Stomach (tissue), 19 donors: ENCODE measurements at regions of chr11 and their contacts with region 1.

Region 1: DNA sequence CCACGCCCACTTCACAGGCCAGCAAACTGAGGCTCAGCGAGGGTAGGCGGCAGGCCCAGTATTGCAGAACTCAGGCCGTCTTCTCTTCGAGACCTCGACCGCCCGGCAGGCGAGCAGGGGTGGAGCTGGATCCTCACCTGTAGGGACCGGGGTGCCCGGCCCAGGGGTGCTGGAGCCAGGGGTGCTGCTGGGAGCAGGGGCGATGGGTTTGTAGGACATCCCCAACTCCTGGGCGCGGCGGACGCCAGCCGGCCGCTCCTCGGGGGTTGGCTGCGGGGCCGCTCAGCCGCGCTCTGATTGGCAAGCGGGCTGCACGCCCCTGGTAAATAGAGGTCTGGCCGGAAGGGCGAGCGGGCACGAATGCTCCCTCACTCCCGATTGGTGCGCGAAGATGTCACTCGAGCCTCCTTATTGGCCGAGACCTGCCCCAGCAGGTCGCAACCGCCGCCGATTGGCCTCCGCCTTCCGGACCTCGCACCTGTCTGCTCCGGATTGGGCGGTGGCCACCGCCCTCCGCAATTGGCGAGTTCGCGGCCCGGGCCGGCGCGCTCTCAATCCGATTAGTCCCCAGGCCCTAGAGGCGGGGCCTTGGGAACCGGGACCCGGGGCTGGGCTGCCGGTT is at the start of gene CDK2AP2:
- DNase-seq: peak; percentile 100
- H3K4me3 ChIP-seq: peak within 1 kb of the TSS; percentile 72 to 87 (median 80)
- H3K27ac ChIP-seq: peak within 1 kb of the TSS; percentile 94 to 99 (median 98)
- H3K4me1 ChIP-seq: peaks cover 49 to 56% (median 54%) of the 10 kb centered on the region in 4 donors
- H3K27me3 ChIP-seq: peaks cover 0 to 34% (median 0%) of the 10 kb centered on the region in 3 donors
- CTCF ChIP-seq: no peak
- EP300 ChIP-seq: no peak
- POLR2A ChIP-seq: peak in 1 of 4 donors; percentile 86
- total RNA-seq, gene CDK2AP2: 8.3 to 68.3 (median 52.7) TPM

Region 2: DNA sequence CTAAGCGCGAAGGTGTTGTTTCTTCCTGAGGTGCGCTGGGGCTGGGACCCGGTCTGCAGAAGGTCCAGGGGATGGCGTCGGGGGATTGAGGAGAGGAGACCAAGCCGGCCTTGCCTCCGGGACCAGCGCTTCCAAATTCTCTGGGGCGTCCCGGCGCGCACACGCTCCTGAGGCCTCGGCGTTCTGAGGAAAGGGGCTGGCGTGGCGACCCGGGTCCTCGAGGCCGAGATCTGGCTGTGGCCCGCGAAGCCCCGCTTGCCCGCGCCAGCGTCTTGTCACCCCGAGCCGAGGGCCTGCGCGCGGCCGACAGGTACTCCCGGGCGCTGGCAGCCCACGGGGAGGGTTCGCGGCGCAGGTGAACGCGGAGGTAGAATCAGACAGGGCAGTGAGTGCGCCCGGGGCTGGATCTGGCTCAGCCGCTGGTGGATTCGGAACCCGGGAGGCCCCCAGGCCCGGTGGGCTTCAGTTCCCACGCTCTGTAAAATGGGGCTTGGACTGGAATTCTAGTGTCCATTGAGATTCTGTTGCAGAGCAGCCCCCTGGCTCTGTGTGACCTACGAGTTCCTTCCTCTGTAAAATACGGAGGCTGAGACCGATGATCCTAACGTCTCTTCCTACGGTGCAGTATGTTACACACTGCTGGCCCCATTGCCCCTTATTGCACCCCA is 190.0 kb before region 1 on chr11:
- intact Hi-C with region 1: no loop called
- DNase-seq: peak in 1 of 2 donors; percentile 54
- H3K4me3 ChIP-seq: peak overlapping the region; percentile 83 to 97 (median 91)
- H3K27ac ChIP-seq: peak overlapping the region; percentile 90 to 99 (median 92)
- H3K4me1 ChIP-seq: peaks cover 13 to 48% (median 37%) of the 10 kb centered on the region in 4 donors
- H3K27me3 ChIP-seq: no peaks in the 10 kb centered on the region
- CTCF ChIP-seq: no peak
- EP300 ChIP-seq: no peak
- POLR2A ChIP-seq: no peak

Region 3: DNA sequence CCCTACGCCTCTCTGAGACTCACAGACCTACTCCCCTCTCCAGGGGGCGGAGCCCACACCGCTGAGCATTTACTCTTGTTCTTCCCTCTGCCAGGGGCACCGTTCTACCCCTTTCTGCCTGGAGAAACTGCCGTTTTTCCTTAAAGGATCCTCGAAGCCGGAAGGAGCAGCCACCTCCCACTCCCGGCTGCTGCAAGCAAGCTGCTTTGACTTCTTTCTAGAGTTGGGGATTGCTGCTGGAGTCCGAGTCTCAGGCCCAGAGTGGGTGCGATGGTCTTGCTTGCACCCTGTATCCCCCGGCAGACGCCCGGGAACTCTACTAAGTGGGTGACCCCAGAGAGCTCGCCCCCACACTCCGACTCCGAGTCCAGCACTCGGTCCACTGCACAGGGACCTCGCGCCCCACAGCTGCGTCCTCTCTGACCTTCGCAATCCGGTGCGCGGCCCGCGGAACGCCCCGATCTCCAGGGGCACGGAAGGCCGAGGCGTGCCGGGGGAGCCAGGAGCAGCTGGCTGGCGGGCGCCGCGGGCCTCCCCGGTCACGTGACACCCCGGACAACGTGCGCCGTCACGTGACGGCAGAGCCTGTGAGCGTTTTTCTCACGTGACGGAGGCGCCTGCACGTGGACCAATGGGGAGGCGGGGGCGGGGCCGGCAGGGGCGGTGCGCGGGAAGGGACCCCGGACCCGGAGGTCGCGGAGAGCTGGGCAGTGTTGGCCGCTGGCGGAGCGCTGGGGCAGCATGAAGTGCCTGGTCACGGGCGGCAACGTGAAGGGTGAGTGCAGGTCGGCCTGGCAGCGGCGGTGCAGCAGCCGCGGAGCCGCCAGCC is 116.5 kb before region 1 on chr11 and contains the start of gene RAD9A:
- intact Hi-C with region 1: no loop called
- DNase-seq: peak; percentile 97 to 98
- H3K4me3 ChIP-seq: peak within 1 kb of the TSS; percentile 67 to 96 (median 92)
- H3K27ac ChIP-seq: peak within 1 kb of the TSS; percentile 83 to 90 (median 84)
- H3K4me1 ChIP-seq: peaks cover 14 to 46% (median 35%) of the 10 kb centered on the region in 4 donors
- H3K27me3 ChIP-seq: no peaks in the 10 kb centered on the region
- CTCF ChIP-seq: peak in 1 of 7 experiments; percentile 8
- EP300 ChIP-seq: no peak
- POLR2A ChIP-seq: no peak
- total RNA-seq, gene RAD9A: 7.0 to 88.9 (median 29.5) TPM

Region 4: DNA sequence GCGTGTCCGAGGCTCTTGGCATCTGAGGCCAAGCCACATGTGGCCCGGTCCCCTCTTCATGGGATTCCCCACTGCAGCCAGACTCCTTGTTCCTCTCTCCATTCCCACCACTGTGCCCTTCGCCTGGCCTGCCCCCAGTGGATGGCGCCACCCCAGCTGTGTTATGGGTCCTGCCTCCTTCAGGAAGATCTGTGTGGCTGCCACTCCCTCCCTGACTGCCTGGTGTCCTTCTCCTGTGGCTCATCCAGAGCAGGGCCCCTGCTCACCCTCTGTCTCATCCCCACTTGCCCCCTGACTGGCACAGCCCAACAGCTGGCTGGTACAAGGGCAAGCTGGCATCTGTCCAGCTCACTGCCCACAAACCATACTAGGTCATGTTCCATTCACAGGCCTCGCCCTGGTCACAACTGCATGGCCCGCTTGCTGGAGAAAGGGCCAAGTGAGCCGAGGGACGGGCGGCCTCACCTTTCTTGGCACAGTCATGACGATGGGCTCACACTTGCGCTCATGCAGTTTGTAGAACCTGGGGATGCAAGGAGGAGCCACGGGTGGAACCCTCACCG is 68.6 kb before region 1 on chr11:
- intact Hi-C with region 1: loop called (anchors 10 kb)
- DNase-seq: peak; percentile 32 to 65
- H3K4me3 ChIP-seq: peak overlapping the region in 1 of 4 donors; percentile 45
- H3K27ac ChIP-seq: peak overlapping the region; percentile 8 to 96 (median 73)
- H3K4me1 ChIP-seq: peaks cover 36 to 81% (median 70%) of the 10 kb centered on the region in 4 donors
- H3K27me3 ChIP-seq: no peaks in the 10 kb centered on the region
- CTCF ChIP-seq: no peak
- EP300 ChIP-seq: no peak
- POLR2A ChIP-seq: no peak